ENCODE measurements at regions of chr14 and their contacts with region 1.

Region 1: DNA sequence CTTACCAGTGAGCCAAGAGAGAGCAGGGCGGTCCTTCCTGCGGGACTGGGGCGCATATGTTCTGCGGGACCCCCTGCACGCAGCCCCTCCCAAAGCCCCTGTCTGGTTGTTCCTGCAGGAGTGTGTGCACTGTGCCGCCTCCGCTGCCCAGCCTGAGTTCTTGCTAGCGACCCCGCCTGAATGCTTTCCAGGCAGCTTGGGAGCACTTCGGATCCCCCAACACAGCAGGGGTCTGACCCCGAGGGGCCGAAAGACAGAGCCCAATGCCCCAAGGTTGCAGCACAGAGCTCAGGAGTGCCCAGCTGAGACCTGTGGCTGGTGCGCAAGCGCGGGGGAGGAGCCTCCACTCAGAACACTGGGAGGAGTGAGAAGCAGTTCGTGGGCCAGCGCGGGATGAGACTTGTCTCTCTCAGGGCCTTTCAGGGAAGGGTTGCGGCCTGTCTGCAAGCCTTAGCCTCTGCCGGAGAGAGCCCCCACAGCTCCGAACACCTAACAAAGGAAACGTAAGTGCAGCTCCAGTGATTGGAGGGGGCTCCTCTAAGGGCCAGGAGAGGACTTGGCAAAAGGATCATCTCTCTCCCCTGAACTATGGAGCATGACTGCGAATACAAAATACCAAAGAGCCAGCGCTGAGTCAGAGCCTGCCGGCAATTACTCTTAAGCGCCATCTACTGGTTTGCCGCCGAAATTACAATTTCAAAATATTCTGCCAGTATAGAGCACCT is 50.5 kb downstream of the GTF2A1 start:
- DNase-seq: peak; percentile 96

Region 2: GRCh38 chr14:80726211-80726610 is 444.1 kb before region 1 on chr14:
- intact Hi-C with region 1: no loop called
- DNase-seq: no peak

Region 3: DNA sequence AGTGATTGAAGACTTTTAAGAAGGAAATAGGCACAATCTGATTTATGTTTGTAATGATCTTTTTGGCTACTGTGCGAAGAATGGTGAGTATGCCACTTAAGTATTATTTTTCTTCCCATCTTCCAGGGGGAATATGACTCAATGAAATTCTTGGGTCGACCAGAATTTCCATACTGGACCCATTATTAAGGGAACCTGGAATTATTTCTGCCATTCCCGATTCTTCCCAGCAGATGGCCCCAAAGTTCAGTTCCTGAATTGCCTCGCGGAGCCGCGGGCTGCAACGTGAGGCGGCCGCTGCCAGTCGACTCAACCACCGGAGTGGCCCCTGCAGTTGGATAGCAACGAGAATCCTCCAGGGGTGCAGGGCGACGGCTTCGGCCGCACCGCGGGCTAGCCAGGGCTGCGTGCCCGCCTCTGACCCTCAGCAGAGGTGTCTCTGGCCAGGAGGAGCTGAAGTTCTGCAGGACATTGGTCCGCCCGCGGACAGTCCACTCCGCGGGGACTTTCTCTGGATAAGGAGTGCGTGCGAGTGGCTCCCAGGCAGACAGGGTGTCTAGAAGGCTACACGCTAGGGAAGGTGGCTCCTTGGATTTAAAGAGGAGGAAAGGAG is 215.5 kb before region 1 on chr14:
- intact Hi-C with region 1: loop called (anchors 10 kb)
- DNase-seq: peak; percentile 91

Region 4: DNA sequence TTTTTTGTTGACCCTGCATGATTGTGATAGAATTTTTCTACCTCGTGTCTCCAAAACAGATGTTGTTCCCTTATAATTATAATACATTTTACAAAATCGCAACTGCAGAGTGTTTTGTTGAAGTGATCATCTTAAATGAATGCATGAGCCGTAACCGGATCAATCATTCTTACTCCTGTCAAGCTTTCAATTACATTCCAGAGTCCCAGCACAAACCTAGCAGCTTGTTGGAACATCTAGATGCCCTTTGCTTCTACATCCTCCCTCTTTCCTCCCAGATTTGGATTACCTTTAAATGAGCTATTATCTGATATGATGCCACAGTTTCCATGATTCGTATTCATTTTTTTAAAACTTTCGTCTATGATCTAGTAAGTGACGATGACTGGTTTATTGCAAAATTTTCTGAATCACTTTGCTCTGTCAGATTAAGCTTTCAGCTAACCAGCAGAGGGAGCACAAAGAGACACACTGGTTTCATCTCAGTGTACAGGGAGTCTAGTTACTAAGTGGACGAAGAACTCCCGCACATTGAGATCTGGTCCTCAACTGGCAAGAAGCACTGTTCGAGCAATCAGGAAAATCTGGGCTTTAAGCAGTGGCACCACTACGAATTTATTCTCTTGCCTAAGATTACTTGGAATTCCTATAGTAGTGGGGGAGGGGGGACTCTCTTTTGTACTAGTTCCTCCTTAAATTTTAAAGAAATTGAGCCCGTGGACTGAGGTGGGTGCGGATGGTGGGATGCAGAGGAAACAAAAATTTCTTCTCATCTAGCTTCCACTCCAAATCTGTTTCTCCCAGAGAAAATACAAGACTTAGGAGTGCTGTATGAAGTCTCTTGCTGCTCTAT is 174.0 kb before region 1 on chr14:
- intact Hi-C with region 1: loop called (anchors 2 kb)
- DNase-seq: no peak

Region 5: GRCh38 chr14:81122326-81122725 is 47.9 kb before region 1 on chr14:
- intact Hi-C with region 1: no loop called
- DNase-seq: no peak

Region 6: GRCh38 chr14:81220830-81221578 is 50.7 kb after region 1 on chr14 and contains the start of gene GTF2A1:
- intact Hi-C with region 1: loop called (anchors 2 kb)
- DNase-seq: peak; percentile 98
- total RNA-seq, gene GTF2A1: 18.0 TPM

Region 7: GRCh38 chr14:81303248-81304221 is 133.3 kb after region 1 on chr14:
- intact Hi-C with region 1: no loop called
- DNase-seq: peak; percentile 79